IMR-90 (cell line): ENCODE measurements at regions of chr4 and their contacts with region 1.

Region 1: DNA sequence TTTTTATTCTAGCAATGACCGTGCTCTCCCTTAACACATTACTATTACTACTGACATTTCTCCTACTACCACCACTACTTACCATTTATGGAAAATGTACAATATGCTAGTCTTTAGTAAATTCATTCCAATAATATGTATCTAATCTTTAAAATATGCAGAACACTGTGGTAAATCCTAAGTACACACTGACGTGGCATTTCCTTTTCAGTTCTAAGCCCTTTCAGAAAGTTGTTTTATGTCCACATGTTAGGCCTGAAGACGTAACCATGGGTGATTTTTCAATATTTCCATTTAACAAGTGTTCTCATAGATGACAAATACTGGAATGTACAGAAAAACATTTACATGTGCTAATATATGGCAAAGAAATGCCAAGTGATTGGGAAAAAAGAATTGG is 268.6 kb upstream of the SLIT2 start:
- DNase-seq: peak; percentile 99
- ATAC-seq: peak; percentile 74
- H3K4me3 ChIP-seq: no peak overlapping the region
- H3K27ac ChIP-seq: peak overlapping the region; percentile 86; the same call in 1 of the 2 replicates
- H3K4me1 ChIP-seq: peaks cover 4% of the 10 kb centered on the region
- H3K27me3 ChIP-seq: no peaks in the 10 kb centered on the region
- CTCF ChIP-seq: no peak
- POLR2A ChIP-seq: no peak
- RAD21 ChIP-seq: peak; percentile 11

Region 2: DNA sequence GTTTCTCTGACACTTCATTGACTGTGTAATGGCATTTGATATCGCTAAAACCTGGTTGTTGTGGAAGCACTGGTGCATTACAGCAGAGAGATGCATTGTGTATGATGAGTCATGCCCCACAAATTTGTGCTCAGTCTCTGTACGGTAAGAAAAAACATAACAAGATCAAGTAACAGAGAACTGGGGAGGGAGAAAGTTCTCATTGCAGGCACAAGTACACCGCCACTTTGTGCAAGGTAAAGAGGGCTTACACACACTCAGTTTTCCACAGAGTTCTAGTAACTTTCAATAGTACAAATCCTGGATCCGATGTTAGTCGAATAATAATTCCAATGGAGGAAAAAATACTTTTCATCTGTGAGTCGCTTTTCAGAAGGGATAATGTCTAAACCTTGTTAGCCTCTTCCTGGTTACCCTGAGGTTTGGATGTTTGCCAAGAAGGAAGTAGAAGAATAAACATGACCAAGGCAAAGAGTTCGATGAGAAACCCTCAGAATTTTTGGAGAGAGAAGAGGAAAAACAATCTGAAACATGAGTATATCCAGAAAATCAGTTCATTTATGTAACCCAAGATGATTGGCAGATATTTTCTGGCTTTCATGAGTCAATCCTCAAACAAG is 243.9 kb before region 1 on chr4:
- CTCF ChIA-PET with region 1: no interaction called
- POLR2A ChIA-PET with region 1: no interaction called
- dilution Hi-C with region 1: no loop called
- in situ Hi-C with region 1: no loop called
- intact Hi-C with region 1: loop called (anchors 1 kb)
- DNase-seq: peak; percentile 95
- ATAC-seq: peak; percentile 97
- H3K4me3 ChIP-seq: peak overlapping the region; percentile 14; the same call in 1 of the 2 replicates
- H3K27ac ChIP-seq: peak overlapping the region; percentile 42; the same call in 1 of the 2 replicates
- H3K4me1 ChIP-seq: peaks cover 5% of the 10 kb centered on the region
- H3K27me3 ChIP-seq: no peaks in the 10 kb centered on the region
- CTCF ChIP-seq: no peak
- POLR2A ChIP-seq: no peak
- RAD21 ChIP-seq: peak; percentile 26; the same call in 1 of the 2 replicates

Region 3: GRCh38 chr4:20109391-20109790 is 126.3 kb after region 1 on chr4:
- CTCF ChIA-PET with region 1: no interaction called
- POLR2A ChIA-PET with region 1: no interaction called
- dilution Hi-C with region 1: no loop called
- in situ Hi-C with region 1: no loop called
- intact Hi-C with region 1: no loop called
- DNase-seq: peak; percentile 18
- ATAC-seq: no peak
- H3K4me3 ChIP-seq: no peak overlapping the region
- H3K27ac ChIP-seq: no peak overlapping the region
- H3K4me1 ChIP-seq: no peaks in the 10 kb centered on the region
- H3K27me3 ChIP-seq: no peaks in the 10 kb centered on the region
- CTCF ChIP-seq: no peak
- POLR2A ChIP-seq: no peak
- RAD21 ChIP-seq: no peak